ENCODE measurements at regions of chr1 and their contacts with region 1.

Region 1: GRCh38 chr1:185681034-185681633 is 53.1 kb upstream of the HMCN1 start:
- DNase-seq: no peak
- H3K4me3 Mint-ChIP-seq: no peak overlapping the region
- H3K27ac Mint-ChIP-seq: no peak overlapping the region
- H3K4me1 Mint-ChIP-seq: peaks cover 23% of the 10 kb centered on the region
- H3K27me3 Mint-ChIP-seq: peaks cover 2% of the 10 kb centered on the region

Region 2: GRCh38 chr1:185044981-185045813 is 635.9 kb before region 1 on chr1 and contains the start of gene RNF2:
- CTCF ChIA-PET with region 1: interaction called, 4 read pairs
- POLR2A ChIA-PET with region 1: no interaction called
- intact Hi-C with region 1: loop called (anchors 10 kb)
- DNase-seq: peak; percentile 85
- H3K4me3 Mint-ChIP-seq: peak within 1 kb of the TSS; percentile 90
- H3K27ac Mint-ChIP-seq: peak within 1 kb of the TSS; percentile 72
- H3K4me1 Mint-ChIP-seq: peaks cover 39% of the 10 kb centered on the region
- H3K27me3 Mint-ChIP-seq: no peaks in the 10 kb centered on the region
- total RNA-seq, gene RNF2: 20.7 to 21.2 TPM

Region 3: DNA sequence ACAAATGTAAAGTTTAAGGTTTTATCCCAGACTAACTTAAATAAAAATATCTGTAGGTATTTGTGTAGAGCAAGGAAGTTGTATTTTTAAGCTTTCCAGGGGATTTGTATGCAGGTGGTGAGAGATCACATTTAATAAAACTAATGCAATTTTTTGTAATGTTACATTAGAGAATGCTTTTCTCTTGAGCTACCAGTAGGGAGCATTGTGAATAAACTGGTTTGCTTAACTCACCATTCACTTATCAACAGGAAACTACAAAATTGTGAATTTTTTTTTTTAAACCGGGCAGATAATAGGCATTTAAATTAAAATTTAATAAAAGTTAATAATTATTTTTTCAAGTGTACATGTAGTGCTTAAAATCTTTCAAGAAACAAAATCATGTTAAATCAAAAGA is 442.7 kb before region 1 on chr1:
- CTCF ChIA-PET with region 1: interaction called, 12 read pairs
- POLR2A ChIA-PET with region 1: no interaction called
- intact Hi-C with region 1: loop called (anchors 1 kb)
- DNase-seq: no peak
- H3K4me3 Mint-ChIP-seq: no peak overlapping the region
- H3K27ac Mint-ChIP-seq: no peak overlapping the region
- H3K4me1 Mint-ChIP-seq: peaks cover 28% of the 10 kb centered on the region
- H3K27me3 Mint-ChIP-seq: no peaks in the 10 kb centered on the region

Region 4: DNA sequence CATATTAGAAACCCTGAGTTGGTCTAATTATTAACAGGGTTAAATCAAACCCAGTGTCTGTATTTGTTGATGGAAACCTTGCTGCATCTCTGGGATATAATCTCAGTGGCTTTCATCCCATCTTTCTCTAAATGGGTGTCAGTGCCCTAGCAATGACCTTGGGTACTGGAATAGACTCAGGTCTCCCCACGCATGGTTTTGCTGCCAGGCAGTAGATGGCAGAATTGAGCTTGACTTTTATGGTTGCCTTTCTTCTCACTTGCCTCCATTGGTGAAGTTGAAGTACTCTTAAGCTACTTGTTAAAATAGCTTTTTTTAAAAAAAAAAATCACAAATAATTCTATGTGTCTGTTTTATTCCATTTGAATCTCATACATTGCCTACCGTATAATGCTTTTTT is 28.8 kb before region 1 on chr1:
- CTCF ChIA-PET with region 1: interaction called, 19 read pairs
- POLR2A ChIA-PET with region 1: no interaction called
- intact Hi-C with region 1: no loop called
- DNase-seq: no peak
- H3K4me3 Mint-ChIP-seq: no peak overlapping the region
- H3K27ac Mint-ChIP-seq: no peak overlapping the region
- H3K4me1 Mint-ChIP-seq: peaks cover 9% of the 10 kb centered on the region
- H3K27me3 Mint-ChIP-seq: no peaks in the 10 kb centered on the region

Measured in activated CD4-positive, alpha-beta memory T cell treated with anti-CD3 and anti-CD28 coated beads for 36 hours (primary cell).